Ascending aorta (tissue), 2 donors: ENCODE measurements at regions of chr6 and their contacts with region 1.

Region 1: GRCh38 chr6:122530440-122531046 is 58.9 kb upstream of the SERINC1 start:
- DNase-seq: peak in 1 of 2 donors; percentile 72
- H3K4me3 ChIP-seq: no peak overlapping the region
- H3K27ac ChIP-seq: no peak overlapping the region
- H3K4me1 ChIP-seq: no peaks in the 10 kb centered on the region
- H3K27me3 ChIP-seq: no peaks in the 10 kb centered on the region
- CTCF ChIP-seq: peak; percentile 70 to 83 (median 82)

Region 2: DNA sequence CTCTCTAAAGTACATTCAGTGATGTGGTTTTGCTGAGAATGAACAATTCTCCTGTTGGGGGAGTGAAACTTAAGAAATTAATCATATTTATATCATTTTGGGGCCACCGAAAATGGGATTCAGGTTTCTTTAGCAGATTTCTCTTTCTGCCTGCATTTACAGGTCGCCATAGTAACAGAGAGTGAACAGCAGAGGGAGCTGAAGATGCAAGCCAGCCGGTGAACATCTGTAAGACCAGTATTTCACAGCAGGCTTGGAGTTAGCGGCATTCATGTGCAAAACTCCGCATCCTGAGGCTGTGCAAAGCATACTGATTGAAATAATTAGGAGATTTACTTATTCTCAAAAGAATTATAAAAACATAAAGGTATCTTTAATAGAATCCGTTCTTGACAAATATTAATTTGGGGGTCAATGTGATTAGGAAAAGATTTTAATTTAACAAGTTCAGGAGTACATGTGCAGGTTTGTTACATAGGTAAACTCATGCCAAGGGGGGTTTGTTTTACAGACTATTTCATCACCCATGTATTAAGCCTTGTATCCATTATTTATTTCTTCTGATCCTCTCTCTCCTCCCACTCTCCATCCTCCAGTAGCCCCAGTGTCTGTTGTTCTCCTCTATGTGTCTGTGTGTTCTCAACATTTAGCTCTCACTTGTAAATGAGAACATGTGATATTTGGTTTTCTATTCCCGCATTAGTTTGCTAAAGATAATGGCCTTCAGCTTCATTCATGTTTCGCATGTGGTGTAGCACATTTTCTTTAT is 148.9 kb before region 1 on chr6:
- intact Hi-C with region 1: loop called (anchors 2 kb)
- DNase-seq: peak in 1 of 2 donors; percentile 71
- H3K4me3 ChIP-seq: no peak overlapping the region
- H3K27ac ChIP-seq: no peak overlapping the region
- H3K4me1 ChIP-seq: no peaks in the 10 kb centered on the region
- H3K27me3 ChIP-seq: no peaks in the 10 kb centered on the region
- CTCF ChIP-seq: peak; percentile 64 to 85 (median 72)

Region 3: DNA sequence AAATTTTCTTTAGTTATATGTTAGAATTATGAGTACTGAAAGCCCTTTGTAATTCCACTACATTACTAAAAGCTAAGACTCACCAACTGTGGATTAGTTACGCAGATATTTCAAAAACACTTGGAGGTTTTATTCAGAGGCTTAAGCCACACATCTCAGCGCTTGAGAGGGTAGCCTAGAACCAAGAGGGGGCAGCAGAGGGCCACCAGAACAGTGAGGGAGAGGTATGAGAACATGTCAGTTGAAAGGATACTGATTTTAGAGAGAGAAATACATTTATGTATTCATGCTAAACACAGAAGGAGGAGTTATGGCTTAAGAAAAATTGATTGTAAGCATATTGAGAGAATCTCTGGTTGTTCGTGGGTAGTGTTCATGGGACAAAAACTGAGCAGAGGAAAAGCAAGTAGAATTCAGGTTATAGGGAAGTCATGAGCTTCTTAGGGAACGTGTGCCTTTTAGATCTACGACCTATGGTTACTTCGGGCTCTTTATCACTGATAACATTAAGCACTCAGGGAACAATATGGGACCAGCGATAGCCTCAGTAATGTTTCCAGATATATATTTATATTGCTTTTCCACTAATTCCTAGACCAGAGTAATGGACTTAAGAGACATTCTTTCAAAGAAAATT is 38.5 kb before region 1 on chr6:
- intact Hi-C with region 1: loop called (anchors 1 kb)
- DNase-seq: peak; percentile 11 to 82
- H3K4me3 ChIP-seq: peak overlapping the region in 1 of 2 donors; percentile 14
- H3K27ac ChIP-seq: no peak overlapping the region
- H3K4me1 ChIP-seq: peaks cover 0 to 2% of the 10 kb centered on the region in 2 donors
- H3K27me3 ChIP-seq: no peaks in the 10 kb centered on the region
- CTCF ChIP-seq: peak; percentile 39 to 91 (median 82)

Region 4: GRCh38 chr6:122696079-122696478 is 165.5 kb after region 1 on chr6:
- intact Hi-C with region 1: no loop called
- DNase-seq: no peak
- H3K4me3 ChIP-seq: no peak overlapping the region
- H3K27ac ChIP-seq: no peak overlapping the region
- H3K4me1 ChIP-seq: no peaks in the 10 kb centered on the region
- H3K27me3 ChIP-seq: no peaks in the 10 kb centered on the region
- CTCF ChIP-seq: no peak